ENCODE measurements at regions of chr6 and their contacts with region 1.

Region 1: DNA sequence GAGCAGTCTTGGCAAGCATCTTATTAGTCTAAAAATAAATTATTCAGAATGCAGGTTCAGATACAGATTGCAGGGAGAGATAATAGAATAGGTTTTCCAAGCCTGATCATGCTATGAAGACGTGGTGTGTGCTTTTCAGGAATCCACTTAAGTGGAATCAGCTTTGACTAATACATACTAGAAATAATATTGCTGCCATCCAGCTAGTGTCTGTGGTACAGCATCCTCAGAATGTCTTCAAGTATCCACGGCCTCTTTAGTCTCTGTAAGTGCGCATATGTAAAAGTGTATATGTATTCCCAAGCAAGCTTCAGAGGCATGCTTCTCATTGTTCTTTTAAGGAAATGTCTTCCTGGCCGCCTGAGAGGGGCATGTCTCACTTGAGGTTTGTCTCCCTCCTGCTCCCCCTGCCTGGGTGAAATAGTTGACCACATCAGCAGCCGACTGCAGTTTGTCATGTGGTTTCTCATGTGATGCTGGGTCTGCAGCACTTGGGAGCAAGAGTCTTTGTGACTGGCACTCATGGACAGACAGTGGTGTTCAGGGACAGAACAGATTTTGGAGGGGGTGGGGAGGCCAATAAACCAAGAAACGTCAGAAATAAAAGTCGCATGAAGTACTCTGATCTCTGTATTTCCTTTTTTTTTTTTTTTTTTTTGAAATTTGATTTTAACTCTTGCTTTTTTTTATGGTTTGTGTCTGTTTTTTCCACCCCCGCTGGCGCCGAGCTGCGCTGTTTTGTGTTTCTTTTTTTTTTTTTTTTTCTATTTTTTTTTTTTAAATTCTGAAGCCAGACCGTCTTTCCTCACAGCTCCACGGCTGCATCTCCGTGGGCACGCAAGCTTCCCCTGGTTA is 150.8 kb downstream of the PRL start:
- DNase-seq: peak; percentile 9
- ATAC-seq: no peak
- H3K4me3 Mint-ChIP-seq: peak overlapping the region; percentile 70
- H3K27ac Mint-ChIP-seq: peak overlapping the region; percentile 63
- H3K4me1 Mint-ChIP-seq: peaks cover 32% of the 10 kb centered on the region
- H3K27me3 Mint-ChIP-seq: peaks cover 36% of the 10 kb centered on the region

Region 2: DNA sequence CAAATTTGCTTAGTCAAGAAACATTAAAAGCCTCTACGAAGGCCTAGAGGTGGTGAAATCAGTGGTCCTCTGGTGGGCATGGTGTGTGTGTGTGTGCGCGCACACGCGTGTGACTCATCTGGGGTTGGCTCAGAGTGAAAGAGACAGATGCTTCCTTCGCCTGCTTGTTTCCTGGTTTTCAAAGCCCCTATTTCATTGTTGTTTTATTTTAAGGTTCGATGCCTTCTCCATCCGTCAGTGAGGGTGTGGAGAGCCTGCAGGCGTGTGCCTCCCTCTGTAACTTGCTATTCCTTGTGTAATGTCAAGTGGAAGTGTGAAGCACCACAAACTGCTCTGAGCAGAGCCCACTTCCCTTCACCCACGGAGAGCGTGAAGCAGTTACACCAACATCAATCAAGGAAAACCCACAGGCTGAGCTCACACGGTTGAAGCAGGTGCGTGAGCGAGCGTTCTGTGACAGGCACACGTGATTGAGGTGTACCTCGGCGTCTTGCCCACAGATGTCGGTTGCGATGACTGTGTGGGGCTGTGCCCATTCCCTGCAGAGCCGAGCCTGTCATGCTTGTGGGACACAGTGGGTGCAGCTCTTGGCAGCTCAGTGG is 83.1 kb before region 1 on chr6:
- CTCF ChIA-PET with region 1: no interaction called
- POLR2A ChIA-PET with region 1: interaction called, 4 read pairs
- intact Hi-C with region 1: loop called (anchors 5 kb)
- DNase-seq: peak; percentile 82
- ATAC-seq: peak; percentile 83
- H3K4me3 Mint-ChIP-seq: peak overlapping the region; percentile 43
- H3K27ac Mint-ChIP-seq: peak overlapping the region; percentile 86
- H3K4me1 Mint-ChIP-seq: peaks cover 40% of the 10 kb centered on the region
- H3K27me3 Mint-ChIP-seq: peaks cover 12% of the 10 kb centered on the region

Region 3: GRCh38 chr6:22068561-22069305 is 77.3 kb before region 1 on chr6:
- CTCF ChIA-PET with region 1: no interaction called
- POLR2A ChIA-PET with region 1: interaction called, 6 read pairs
- intact Hi-C with region 1: loop called (anchors 5 kb)
- DNase-seq: peak; percentile 59
- ATAC-seq: peak; percentile 90
- H3K4me3 Mint-ChIP-seq: peak overlapping the region; percentile 11
- H3K27ac Mint-ChIP-seq: peak overlapping the region; percentile 81
- H3K4me1 Mint-ChIP-seq: peaks cover 32% of the 10 kb centered on the region
- H3K27me3 Mint-ChIP-seq: peaks cover 10% of the 10 kb centered on the region

Region 4: GRCh38 chr6:22091424-22091948 is 54.6 kb before region 1 on chr6:
- CTCF ChIA-PET with region 1: no interaction called
- POLR2A ChIA-PET with region 1: interaction called, 3 read pairs
- intact Hi-C with region 1: loop called in 1 of 2 experiments (anchors 5 kb)
- DNase-seq: no peak
- ATAC-seq: peak; percentile 93
- H3K4me3 Mint-ChIP-seq: no peak overlapping the region
- H3K27ac Mint-ChIP-seq: no peak overlapping the region
- H3K4me1 Mint-ChIP-seq: peaks cover 14% of the 10 kb centered on the region
- H3K27me3 Mint-ChIP-seq: no peaks in the 10 kb centered on the region

Region 5: GRCh38 chr6:22173311-22173710 is 27.3 kb after region 1 on chr6:
- CTCF ChIA-PET with region 1: no interaction called
- POLR2A ChIA-PET with region 1: no interaction called
- intact Hi-C with region 1: no loop called
- DNase-seq: no peak
- ATAC-seq: no peak
- H3K4me3 Mint-ChIP-seq: no peak overlapping the region
- H3K27ac Mint-ChIP-seq: no peak overlapping the region
- H3K4me1 Mint-ChIP-seq: no peaks in the 10 kb centered on the region
- H3K27me3 Mint-ChIP-seq: no peaks in the 10 kb centered on the region